AG04449 (cell line): ENCODE measurements at regions of chr1 and their contacts with region 1.

Region 1: DNA sequence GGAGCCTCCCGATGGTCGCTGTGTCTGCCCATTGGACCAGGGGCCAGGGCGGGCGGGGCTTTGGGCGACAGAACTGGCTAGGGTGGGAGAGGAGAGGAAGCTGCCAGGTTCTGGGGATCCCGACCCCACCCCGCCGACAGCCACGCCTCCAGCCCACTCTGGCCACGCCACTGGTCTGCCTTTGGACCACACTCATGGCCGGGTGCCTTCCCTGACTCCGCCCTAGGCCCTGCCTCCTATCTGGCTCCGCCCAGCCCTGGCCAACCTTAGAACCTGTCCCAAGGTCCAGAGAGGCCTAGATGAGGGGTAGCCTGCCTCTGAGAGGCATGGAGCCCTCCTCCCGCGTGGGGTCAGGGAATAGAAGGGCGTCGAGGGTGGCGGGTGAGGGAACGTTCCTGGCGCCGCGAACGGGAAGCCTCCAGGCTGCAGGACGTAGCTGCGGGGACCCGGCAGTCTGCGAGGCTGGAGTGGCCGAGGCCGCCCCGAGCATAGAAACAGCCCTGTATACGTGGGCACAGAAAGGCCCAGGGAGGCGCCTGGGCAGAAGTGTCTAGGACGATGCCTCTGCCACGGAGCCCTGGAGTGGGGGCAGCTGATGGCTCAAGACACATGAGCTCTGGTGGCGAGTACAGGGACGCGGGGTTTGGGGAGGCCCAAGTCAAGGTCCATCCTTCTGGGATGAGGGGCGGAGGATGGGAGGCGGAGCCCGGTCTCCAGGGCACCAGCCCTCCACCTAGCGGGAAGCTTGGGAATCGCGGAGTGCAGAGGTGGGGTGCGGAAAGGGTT is 11.5 kb upstream of the COL16A1 start:
- DNase-seq: no peak
- H3K4me3 ChIP-seq: peak overlapping the region; percentile 45
- CTCF ChIP-seq: peak; percentile 92

Region 2: DNA sequence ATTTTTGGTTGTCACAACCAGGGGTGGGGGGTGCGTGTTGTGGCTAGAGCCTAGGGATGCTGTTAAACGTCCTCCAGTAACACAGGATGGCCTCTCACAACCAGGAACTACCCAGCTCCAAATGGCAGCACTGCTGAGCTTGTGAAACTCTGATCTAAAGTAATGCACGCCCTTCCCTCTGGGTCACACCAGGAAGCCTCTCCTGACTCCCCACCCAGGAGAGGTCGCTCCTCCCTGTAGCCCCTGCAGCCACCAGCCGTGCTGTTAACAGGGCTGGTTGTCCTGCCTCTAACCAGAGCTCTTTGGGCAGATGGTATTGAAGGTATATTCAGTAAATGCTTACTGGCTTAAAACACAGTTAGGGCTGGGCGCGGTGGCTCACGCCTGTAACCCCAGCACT is 548.8 kb before region 1 on chr1:
- CTCF ChIA-PET with region 1: no interaction called
- POLR2A ChIA-PET with region 1: no interaction called
- DNase-seq: no peak
- H3K4me3 ChIP-seq: no peak overlapping the region
- CTCF ChIP-seq: no peak

Region 3: GRCh38 chr1:31639543-31639942 is 75.7 kb before region 1 on chr1:
- CTCF ChIA-PET with region 1: interaction called, 27 read pairs
- POLR2A ChIA-PET with region 1: interaction called, 5 read pairs
- DNase-seq: peak; percentile 46
- H3K4me3 ChIP-seq: no peak overlapping the region
- CTCF ChIP-seq: no peak

Region 4: DNA sequence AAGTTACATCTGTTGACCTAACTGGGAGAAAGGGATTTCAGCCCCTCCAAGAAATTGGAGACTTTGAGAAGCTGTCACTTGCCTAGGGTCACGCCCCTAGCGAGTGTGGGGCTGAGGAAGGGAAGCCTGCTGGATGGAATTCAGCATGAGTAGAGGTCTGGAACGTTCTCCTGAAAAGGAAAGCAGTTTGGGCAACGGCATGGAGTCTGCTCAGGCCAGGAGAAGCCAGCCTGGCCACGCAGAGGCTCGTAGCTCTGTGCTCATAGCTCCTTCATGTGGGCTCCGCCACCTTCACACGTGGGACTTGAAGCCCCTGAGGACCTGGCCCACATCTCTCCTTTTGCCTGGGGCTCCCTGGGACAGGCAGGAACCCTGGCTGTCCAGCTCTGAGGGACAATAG is 33.8 kb before region 1 on chr1:
- CTCF ChIA-PET with region 1: interaction called, 14 read pairs
- POLR2A ChIA-PET with region 1: interaction called, 3 read pairs
- DNase-seq: no peak
- H3K4me3 ChIP-seq: no peak overlapping the region
- CTCF ChIP-seq: no peak

Region 5: DNA sequence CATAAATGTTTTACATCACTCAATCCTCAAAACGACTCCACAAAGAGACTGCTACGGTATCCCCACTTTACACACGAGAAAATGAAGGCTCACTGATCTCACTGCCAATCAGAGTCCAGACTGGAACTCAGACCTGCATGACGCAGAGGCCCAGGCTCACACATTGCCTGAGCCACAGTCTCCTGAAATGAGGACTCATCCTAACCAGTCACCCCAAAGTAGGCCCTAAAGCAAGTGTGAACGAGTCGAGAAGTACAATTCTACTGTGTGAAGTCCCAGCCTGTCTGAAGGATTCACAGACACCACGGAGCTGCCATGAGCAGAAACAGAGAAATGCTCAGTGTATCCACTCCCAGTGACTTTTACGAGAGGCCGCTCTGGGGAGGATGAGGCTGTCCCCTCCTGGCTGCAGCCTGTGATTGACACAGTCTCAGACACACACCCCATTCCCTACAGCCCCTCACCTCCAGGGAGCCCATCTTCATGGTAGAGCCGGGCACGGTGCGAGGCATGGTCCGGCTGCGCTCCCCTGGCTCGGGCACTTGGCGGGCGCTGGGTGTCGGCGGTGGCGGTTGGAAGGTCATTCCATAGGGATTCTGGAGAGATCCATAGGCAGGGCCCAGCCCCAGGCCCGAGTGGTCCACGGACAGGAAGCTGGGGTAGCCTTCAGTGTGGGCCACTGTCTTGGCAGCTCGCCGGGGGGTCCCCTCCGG is 15.2 kb after region 1 on chr1:
- CTCF ChIA-PET with region 1: interaction called, 73 read pairs
- POLR2A ChIA-PET with region 1: interaction called, 3 read pairs
- DNase-seq: no peak
- H3K4me3 ChIP-seq: no peak overlapping the region
- CTCF ChIP-seq: no peak

Region 6: GRCh38 chr1:31753707-31754349 is 38.5 kb after region 1 on chr1:
- CTCF ChIA-PET with region 1: interaction called, 41 read pairs
- POLR2A ChIA-PET with region 1: no interaction called
- DNase-seq: no peak
- H3K4me3 ChIP-seq: no peak overlapping the region
- CTCF ChIP-seq: no peak

Region 7: GRCh38 chr1:31798433-31799195 is 83.3 kb after region 1 on chr1:
- CTCF ChIA-PET with region 1: no interaction called
- POLR2A ChIA-PET with region 1: no interaction called
- DNase-seq: peak; percentile 81
- H3K4me3 ChIP-seq: peak overlapping the region; percentile 93
- CTCF ChIP-seq: no peak

Region 8: DNA sequence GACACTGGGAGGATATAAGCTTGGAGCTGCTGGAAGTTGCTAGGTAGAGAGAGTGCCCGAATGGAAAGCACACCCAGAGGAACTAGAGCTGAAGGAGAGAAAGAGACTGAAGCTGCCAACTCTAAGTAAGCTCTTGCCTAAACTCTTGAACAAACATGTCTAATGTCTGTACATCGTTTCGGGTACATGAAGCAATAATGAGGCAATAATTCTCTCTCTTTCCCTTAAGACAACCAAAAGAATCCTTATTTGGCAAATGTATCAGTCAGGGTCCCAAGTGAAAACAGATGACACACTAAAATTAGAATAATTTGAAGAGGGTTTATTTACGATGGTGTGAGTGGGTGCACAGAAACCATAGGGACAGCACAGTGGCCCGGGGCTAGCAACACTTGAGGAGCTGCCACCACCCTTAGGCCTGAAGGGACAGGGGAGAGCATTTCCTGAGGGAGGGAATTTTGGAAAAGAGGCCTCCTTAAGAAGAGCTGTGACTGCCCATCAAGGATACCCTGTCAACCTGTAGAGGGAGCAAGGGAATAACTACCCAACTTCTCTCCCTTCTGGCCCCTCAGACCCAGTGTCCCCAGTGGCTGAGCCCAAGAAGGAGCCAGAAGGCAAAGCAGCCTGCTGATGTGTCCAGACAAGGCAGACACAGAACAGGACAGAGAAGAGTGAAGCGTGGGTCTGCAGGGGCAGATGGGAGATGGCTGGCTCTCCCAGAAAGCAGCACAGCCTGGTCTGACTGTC is 262.3 kb after region 1 on chr1:
- CTCF ChIA-PET with region 1: no interaction called
- POLR2A ChIA-PET with region 1: no interaction called
- DNase-seq: peak; percentile 59
- H3K4me3 ChIP-seq: no peak overlapping the region
- CTCF ChIP-seq: peak; percentile 41